GM10248 (cell line): ENCODE measurements at regions of chr14 and their contacts with region 1.

Region 1: GRCh38 chr14:94180655-94181271 is 6.6 kb downstream of the PPP4R4 start:
- DNase-seq: peak; percentile 35
- CTCF ChIP-seq: peak; percentile 61

Region 2: GRCh38 chr14:94056579-94057308 is 124.0 kb before region 1 on chr14:
- CTCF ChIA-PET with region 1: interaction called, 14 read pairs
- POLR2A ChIA-PET with region 1: no interaction called
- DNase-seq: no peak
- CTCF ChIP-seq: no peak

Region 3: DNA sequence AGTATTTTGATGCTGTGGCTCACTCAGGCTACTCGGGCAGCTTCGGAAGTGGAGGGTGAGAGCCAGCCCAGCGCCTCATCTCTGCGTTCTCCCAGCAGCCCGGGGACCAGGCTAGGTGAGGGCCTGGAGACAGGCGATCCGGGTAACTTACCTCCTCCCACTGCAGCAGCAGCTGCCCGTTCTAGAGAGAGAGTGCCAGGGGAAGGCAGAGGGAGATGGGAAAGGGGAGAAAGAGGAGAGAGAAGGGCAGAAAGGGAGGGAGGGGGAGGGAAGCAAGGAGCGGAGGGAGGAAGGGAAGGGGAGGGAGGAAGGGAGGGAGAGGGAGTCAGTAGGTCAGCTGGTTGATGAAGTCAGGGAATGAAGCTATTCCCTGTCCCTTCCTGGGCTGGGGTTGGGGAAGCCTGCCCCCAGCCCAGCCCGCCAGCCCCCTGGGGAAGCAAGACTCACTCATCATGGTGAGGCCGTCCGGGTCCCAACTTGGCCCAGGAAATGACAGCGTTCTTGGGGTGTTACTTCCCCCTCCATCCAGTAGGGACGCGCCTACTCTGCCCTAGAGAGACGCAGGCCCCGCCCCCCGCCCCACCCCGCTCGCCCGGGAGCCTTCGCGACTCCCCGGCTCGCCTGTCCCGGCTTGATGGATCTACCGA is 51.5 kb before region 1 on chr14 and contains the start of gene IFI27L2:
- CTCF ChIA-PET with region 1: interaction called, 16 read pairs
- POLR2A ChIA-PET with region 1: no interaction called
- DNase-seq: peak; percentile 95
- CTCF ChIP-seq: peak; percentile 2

Region 4: GRCh38 chr14:94192534-94192933 is 11.8 kb after region 1 on chr14:
- CTCF ChIA-PET with region 1: interaction called, 16 read pairs
- POLR2A ChIA-PET with region 1: no interaction called
- DNase-seq: no peak
- CTCF ChIP-seq: no peak